H1 (cell line): ENCODE measurements at regions of chr2 and their contacts with region 1.

Region 1: DNA sequence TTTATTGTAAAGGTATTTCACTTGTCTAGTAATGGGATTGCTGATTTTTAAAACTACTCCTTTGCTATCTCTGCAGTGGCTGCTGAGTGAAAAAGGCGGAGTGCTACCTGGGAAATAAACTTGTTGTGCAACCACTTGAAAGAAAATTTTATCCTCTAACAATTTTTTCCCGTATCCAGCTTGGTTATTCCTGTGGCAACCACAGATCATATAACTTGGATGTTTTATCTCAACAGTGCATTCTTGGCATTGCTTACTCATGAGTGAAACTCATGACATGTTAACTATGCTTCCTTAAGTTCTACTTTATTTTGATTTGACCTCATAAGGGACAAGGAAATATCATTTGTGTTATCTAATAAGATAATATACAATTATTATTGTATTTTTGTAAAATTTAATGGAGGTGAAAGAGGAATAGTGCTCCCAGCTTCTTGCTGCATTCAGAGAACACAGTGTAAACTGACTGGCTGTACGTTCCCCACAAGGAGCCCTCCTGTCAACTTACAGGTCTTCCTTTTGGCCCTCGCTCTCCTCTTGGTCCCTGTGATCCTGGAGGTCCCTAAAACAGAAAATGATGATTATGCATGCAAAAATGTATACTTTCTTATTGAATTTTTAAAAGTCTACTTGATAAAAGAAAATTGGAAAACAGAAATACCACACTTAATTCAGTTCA is 82.7 kb downstream of the COL5A2 start:
- DNase-seq: no peak
- H3K4me3 ChIP-seq: no peak overlapping the region
- H3K27ac ChIP-seq: no peak overlapping the region
- H3K4me1 ChIP-seq: no peaks in the 10 kb centered on the region
- H3K27me3 ChIP-seq: peaks cover 0 to 1% (median 0%) of the 10 kb centered on the region in 4 experiments; a peak in 1 of 7 replicates
- CTCF ChIP-seq: no peak
- EP300 ChIP-seq: no peak
- POLR2A ChIP-seq: no peak
- RAD21 ChIP-seq: no peak

Region 2: GRCh38 chr2:189076572-189076971 is 20.3 kb before region 1 on chr2:
- CTCF ChIA-PET with region 1: interaction called, 18 read pairs
- POLR2A ChIA-PET with region 1: no interaction called
- DNase-seq: no peak
- H3K4me3 ChIP-seq: no peak overlapping the region
- H3K27ac ChIP-seq: no peak overlapping the region
- H3K4me1 ChIP-seq: no peaks in the 10 kb centered on the region
- H3K27me3 ChIP-seq: no peaks in the 10 kb centered on the region
- CTCF ChIP-seq: no peak
- EP300 ChIP-seq: no peak
- POLR2A ChIP-seq: no peak
- RAD21 ChIP-seq: no peak

Region 3: GRCh38 chr2:189083106-189083505 is 13.8 kb before region 1 on chr2:
- CTCF ChIA-PET with region 1: interaction called, 10 read pairs
- POLR2A ChIA-PET with region 1: no interaction called
- DNase-seq: no peak
- H3K4me3 ChIP-seq: no peak overlapping the region
- H3K27ac ChIP-seq: no peak overlapping the region
- H3K4me1 ChIP-seq: 0 out of 7 replicates have a peak, but pooled peaks cover 0 to 3% (median 0%) of the 10 kb centered on the region in 4 experiments
- H3K27me3 ChIP-seq: no peaks in the 10 kb centered on the region
- CTCF ChIP-seq: no peak
- EP300 ChIP-seq: no peak
- POLR2A ChIP-seq: no peak
- RAD21 ChIP-seq: no peak

Region 4: DNA sequence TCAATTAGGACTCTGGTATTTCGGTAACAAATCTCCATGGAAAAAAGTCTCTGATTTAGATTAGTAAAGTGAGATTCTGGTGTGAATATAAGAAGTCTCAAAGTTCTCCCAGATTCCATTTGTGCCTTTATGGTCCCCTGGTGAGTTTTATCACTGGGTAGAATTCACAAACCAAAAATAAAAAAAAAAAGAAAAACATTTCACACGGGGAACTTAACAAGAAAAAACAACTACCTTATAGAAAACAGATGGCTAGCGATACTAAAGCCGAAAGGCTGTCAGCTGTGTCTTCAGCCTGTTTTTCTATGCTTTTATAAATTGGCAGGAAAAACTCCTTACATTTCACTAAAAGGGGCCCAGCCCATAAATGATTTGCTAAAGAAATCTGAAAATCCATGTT is 32.1 kb after region 1 on chr2:
- CTCF ChIA-PET with region 1: no interaction called
- POLR2A ChIA-PET with region 1: no interaction called
- DNase-seq: no peak
- H3K4me3 ChIP-seq: no peak overlapping the region
- H3K27ac ChIP-seq: no peak overlapping the region
- H3K4me1 ChIP-seq: no peaks in the 10 kb centered on the region
- H3K27me3 ChIP-seq: no peaks in the 10 kb centered on the region
- CTCF ChIP-seq: no peak
- EP300 ChIP-seq: no peak
- POLR2A ChIP-seq: no peak
- RAD21 ChIP-seq: no peak

Region 5: GRCh38 chr2:189412330-189412953 is 315.5 kb after region 1 on chr2:
- CTCF ChIA-PET with region 1: interaction called, 18 read pairs
- POLR2A ChIA-PET with region 1: interaction called, 3 read pairs
- DNase-seq: peak in 1 of 2 experiments; percentile 56
- H3K4me3 ChIP-seq: no peak overlapping the region
- H3K27ac ChIP-seq: no peak overlapping the region
- H3K4me1 ChIP-seq: no peaks in the 10 kb centered on the region
- H3K27me3 ChIP-seq: no peaks in the 10 kb centered on the region
- CTCF ChIP-seq: peak in 2 of 3 experiments; percentile 64 to 68; a peak in 3 of 4 replicates
- EP300 ChIP-seq: no peak
- POLR2A ChIP-seq: no peak
- RAD21 ChIP-seq: peak; percentile 91 to 92